Aorta (tissue), 5 donors: ENCODE measurements at regions of chr2 and their contacts with region 1.

Region 1: DNA sequence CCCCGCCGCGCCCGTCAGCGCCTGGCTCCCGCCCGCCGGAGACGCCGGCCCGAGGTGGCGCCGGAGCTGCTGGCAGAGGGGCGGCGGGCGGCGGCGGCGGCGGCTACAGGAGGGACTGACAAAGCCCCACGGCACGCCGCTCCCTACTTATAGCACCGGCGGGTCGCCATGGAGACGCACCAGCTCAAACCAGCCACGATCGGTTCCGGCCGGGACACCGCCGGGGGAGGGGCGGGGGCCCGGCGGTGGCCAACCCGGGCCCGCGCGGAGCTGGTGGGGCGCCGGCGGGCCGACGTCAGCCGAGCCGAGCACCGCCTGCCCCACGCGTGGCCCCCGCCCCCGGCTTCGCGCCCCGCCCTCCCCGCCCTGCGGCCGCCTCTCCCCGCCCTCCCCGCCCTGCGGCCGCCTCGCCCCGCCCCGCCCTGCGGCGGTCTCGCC is at the start of gene ODC1:
- DNase-seq: peak; percentile 97 to 100
- ATAC-seq: peak; percentile 95
- H3K4me3 ChIP-seq: peak within 1 kb of the TSS; percentile 36 to 49
- H3K27ac ChIP-seq: peak within 1 kb of the TSS; percentile 72 to 98
- H3K4me1 ChIP-seq: no peaks in the 10 kb centered on the region
- H3K27me3 ChIP-seq: no peaks in the 10 kb centered on the region
- total RNA-seq, gene ODC1: 21.3 to 46.1 TPM

Region 2: DNA sequence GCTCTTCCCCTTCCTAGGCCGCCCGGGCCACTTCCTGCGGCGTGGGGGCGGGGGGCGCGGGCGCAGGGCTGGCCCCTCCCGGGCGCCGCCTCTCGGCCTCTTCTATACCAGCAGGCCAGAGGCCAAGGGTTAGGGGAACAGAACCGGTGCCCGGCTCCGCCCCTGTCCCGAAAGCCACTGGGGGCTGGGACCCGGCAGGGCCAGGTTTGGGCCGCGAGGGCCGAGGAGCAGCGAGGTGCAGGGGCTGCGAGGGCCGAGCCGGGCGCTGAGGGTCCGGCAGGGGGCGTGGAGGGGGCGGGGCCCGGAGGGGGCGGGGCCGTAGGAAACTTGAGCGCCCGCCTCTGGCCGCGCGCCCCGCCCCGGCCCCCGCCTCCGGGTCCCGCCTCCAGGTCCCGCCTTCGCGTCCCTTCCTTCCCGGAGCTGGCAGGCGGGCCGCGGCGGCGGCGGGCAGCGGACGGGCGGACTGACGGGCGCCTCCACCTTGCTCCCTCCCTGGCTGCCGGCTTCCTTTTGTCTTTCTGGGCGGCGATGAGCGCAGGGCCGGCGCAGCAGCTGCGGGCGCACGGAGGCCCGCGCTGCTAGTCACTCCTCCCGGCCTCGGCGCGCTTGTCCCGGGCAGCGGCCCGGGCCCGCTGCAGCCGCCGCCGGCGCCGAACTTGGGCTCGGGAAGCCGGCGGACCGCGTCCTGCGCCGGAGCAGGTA is 145.6 kb before region 1 on chr2 and contains the start of gene HPCAL1:
- intact Hi-C with region 1: loop called in 1 of 2 experiments (anchors 5 kb)
- DNase-seq: peak; percentile 93 to 95
- ATAC-seq: peak; percentile 94
- H3K4me3 ChIP-seq: peak within 1 kb of the TSS; percentile 66 to 91
- H3K27ac ChIP-seq: peak within 1 kb of the TSS in 1 of 2 donors; percentile 45
- H3K4me1 ChIP-seq: no peaks in the 10 kb centered on the region
- H3K27me3 ChIP-seq: no peaks in the 10 kb centered on the region
- total RNA-seq, gene HPCAL1: 21.4 to 28.1 TPM

Region 3: DNA sequence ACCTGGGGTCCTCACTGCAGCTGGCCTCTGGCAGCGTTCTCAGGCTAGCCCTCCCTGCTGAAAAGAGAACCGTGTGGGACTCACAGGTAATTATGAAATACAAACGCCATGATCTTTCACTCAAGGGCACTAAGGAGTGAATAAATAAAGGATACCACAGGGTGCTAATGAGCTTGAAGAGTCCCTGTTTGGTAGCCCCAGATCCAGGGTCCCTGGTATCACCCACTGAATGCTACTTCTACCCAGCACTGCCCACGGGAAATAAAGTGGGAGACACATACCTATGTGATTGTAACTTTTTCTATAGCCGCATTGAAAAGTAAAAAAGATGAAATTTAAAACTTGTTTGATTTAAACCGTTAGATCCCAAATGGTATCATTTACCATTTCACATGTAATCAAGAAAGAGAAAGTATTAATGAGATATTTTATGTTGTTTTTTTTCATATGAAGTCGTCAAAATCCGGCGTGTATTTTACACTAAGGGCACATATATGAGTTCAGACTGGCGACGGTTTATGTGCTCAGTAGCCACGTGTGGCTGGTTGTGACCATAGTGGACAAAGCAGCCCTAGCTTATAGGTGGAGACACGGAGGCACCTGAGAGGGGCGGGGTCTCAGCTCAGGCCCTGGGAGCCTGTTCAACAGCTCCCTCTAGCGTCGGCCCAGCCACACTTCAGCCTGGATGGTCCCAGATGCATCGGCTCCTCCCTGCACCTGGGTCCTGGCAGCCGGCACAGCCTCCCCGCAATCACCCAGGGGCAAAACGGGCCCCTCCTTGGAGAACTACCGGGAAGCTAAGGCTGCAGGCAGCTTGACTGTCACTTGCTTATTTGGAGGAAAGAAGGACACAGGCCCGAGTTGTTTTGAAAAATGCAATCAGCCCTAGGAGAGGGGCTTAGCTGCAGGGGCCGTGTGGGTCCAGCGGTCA is 39.3 kb before region 1 on chr2:
- intact Hi-C with region 1: loop called in 1 of 2 experiments (anchors 5 kb)
- DNase-seq: peak; percentile 79 to 89
- ATAC-seq: peak; percentile 76
- H3K4me3 ChIP-seq: no peak overlapping the region
- H3K27ac ChIP-seq: no peak overlapping the region
- H3K4me1 ChIP-seq: peaks cover 0 to 4% of the 10 kb centered on the region in 2 donors
- H3K27me3 ChIP-seq: no peaks in the 10 kb centered on the region

Region 4: GRCh38 chr2:10688921-10689807 is 240.9 kb after region 1 on chr2:
- intact Hi-C with region 1: loop called in 1 of 2 experiments (anchors 10 kb)
- DNase-seq: peak; percentile 62 to 81
- ATAC-seq: peak; percentile 61
- H3K4me3 ChIP-seq: peak overlapping the region; percentile 7 to 95
- H3K27ac ChIP-seq: peak overlapping the region; percentile 19 to 75
- H3K4me1 ChIP-seq: no peaks in the 10 kb centered on the region
- H3K27me3 ChIP-seq: no peaks in the 10 kb centered on the region